AG04450 (cell line): ENCODE measurements at regions of chr17 and their contacts with region 1.

Region 1: GRCh38 chr17:44533533-44534246 is 23.6 kb upstream of the FZD2 start:
- DNase-seq: peak; percentile 82
- H3K4me3 ChIP-seq: peak overlapping the region; percentile 31
- H3K27ac ChIP-seq: peak overlapping the region; percentile 71
- H3K27me3 ChIP-seq: no peaks in the 10 kb centered on the region
- CTCF ChIP-seq: peak; percentile 97

Region 2: DNA sequence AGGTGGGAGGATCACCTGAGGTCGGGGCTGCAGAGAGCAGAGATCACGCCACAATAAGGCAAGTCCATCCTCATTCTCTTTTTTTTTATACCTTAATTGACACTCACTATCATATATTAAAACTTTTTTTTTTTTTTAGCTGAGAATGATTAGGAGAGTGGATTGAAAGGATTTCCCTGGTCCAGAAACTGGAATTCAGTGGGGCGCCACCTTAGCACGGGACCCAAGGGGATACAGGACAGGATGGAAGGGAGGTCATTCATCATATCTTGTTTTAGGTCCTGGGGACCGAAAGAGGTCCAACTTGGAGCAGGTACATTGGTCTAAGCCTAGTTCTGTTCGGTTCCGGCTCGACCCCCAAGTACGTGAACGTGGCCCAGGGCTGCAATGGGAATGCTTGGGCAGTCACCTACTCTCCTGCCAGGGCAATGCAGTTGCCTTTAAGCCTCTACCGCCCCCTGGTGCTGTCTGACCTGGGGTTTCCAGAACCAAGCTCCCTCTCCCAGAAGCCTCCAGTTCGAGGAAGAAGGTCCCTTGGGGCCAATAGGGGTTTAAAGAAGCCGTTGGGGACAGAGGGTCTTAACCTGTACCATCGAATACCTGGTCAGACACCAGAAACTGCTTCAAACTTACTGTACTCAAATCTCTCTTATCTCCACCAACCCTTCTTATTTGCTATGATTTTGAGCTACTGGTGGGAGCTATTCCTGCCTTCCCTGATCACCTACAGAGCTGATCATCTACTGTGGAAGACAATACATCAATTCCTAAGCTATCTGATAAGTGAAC is 10.6 kb before region 1 on chr17:
- CTCF ChIA-PET with region 1: interaction called, 21 read pairs
- POLR2A ChIA-PET with region 1: no interaction called
- DNase-seq: no peak
- H3K4me3 ChIP-seq: no peak overlapping the region
- H3K27ac ChIP-seq: no peak overlapping the region
- H3K27me3 ChIP-seq: no peaks in the 10 kb centered on the region
- CTCF ChIP-seq: peak; percentile 70

Region 3: DNA sequence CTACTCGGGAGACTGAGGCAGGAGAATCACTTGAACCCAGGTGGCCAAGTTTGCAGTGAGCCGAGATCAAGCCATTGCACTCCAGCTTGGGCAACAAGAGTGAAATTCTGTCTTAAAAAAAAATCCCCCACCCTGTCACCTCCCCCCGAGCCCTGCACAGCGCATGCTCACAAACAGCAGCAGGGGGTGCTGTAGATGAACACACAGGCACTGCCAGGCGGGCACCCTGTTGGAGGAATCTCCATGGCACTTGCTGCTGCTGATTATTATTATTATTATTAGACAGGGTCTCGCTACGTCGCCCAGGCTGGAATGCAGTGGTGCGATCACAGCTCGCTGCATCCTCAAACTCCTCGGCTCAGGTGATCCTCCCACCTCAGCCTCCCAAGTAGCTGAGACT is 48.2 kb after region 1 on chr17:
- CTCF ChIA-PET with region 1: interaction called, 11 read pairs
- POLR2A ChIA-PET with region 1: no interaction called
- DNase-seq: no peak
- H3K4me3 ChIP-seq: no peak overlapping the region
- H3K27ac ChIP-seq: no peak overlapping the region
- H3K27me3 ChIP-seq: peaks cover 5% of the 10 kb centered on the region
- CTCF ChIP-seq: peak; percentile 30

Region 4: DNA sequence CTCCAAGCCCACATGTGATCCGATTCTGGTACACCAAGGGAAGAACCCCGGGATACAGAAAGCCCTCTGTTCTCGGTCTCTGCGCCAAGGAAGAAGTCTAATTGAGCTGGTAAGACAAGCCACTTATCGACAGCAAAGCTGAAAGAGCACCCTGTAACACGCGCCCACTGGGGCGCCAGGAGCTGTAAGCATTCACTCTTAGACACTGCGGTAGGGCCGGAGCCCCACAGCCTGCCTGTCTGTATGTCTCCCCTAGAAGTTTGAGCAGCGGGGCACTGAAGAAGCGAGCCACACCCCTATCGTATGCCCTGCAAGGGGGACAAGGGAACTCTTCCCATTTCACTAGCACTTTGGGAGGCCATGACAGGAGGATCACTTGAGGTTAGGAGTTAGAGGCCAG is 95.6 kb after region 1 on chr17:
- CTCF ChIA-PET with region 1: interaction called, 84 read pairs
- POLR2A ChIA-PET with region 1: interaction called, 3 read pairs
- DNase-seq: no peak
- H3K4me3 ChIP-seq: no peak overlapping the region
- H3K27ac ChIP-seq: no peak overlapping the region
- H3K27me3 ChIP-seq: no peaks in the 10 kb centered on the region
- CTCF ChIP-seq: no peak

Region 5: DNA sequence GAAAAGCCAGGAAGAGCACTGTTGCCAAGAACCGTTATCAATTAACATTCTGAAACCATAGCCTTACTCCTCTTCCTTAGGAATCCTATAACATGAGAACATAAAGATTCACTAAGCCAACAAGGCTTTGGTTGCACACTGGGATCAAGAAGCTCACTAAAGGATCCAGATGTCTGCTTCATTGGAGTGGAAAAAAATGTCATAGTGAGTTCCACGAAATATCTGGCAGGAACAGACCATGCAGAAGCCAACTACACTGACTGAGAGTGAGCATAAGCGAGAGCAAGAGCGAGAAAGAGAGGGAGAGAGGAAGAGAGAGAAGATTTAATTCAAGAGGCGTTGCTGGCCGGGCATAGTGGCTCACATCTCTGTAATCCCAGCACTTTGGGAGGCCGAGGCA is 109.1 kb after region 1 on chr17:
- CTCF ChIA-PET with region 1: interaction called, 89 read pairs
- POLR2A ChIA-PET with region 1: no interaction called
- DNase-seq: no peak
- H3K4me3 ChIP-seq: no peak overlapping the region
- H3K27ac ChIP-seq: no peak overlapping the region
- H3K27me3 ChIP-seq: peaks cover 9% of the 10 kb centered on the region
- CTCF ChIP-seq: no peak

Region 6: GRCh38 chr17:45073414-45074070 is 539.9 kb after region 1 on chr17:
- CTCF ChIA-PET with region 1: no interaction called
- POLR2A ChIA-PET with region 1: no interaction called
- DNase-seq: peak; percentile 93
- H3K4me3 ChIP-seq: no peak overlapping the region
- H3K27ac ChIP-seq: peak overlapping the region; percentile 92
- H3K27me3 ChIP-seq: no peaks in the 10 kb centered on the region
- CTCF ChIP-seq: no peak